Sigmoid colon (tissue), 7 donors: ENCODE measurements at regions of chr1 and their contacts with region 1.

Region 1: DNA sequence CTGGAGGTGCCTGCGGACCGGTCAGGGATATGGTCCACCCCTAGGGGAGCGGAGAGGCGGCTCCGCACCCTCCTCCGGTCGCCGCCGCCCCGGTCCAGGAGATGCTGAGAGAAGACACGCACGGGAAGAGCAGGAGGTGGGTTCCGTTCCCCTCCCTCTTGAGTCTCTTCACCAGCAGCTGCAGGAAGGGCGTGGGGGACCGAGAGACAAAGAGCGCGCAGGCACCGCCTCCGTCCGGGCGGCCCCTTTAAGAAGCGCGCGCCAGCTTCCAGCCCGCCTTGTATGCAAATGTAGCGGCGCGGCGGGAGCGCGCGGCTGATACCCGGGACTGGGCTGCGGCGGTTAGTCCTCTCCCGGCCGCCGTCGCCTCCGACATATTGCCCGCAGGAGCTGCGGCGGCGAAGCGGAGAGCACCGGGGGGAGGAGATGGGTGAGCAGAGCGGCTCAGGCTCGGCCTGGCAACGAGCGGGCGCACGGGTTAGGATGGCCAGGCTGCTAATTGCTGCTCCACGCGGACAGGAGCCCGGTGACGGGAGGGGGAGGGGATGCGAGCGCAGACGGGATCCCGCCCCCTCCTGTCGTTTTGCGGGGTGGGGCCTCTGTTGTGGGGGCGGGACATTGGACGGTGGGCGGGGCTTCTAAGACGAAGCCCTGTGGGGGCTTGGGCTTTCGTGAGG is at the start of gene TMEM39B:
- DNase-seq: peak; percentile 97
- H3K4me3 ChIP-seq: peak within 1 kb of the TSS; percentile 71 to 89 (median 77)
- H3K27ac ChIP-seq: peak within 1 kb of the TSS; percentile 90 to 97 (median 94)
- H3K4me1 ChIP-seq: peaks cover 0 to 22% (median 13%) of the 10 kb centered on the region in 4 donors
- H3K27me3 ChIP-seq: no peaks in the 10 kb centered on the region
- CTCF ChIP-seq: peak in 2 of 4 experiments; percentile 16 to 46
- EP300 ChIP-seq: peak in 1 of 4 donors; percentile 63
- POLR2A ChIP-seq: peak; percentile 26 to 44
- total RNA-seq, gene TMEM39B: 2.0 to 6.7 (median 3.7) TPM

Region 2: DNA sequence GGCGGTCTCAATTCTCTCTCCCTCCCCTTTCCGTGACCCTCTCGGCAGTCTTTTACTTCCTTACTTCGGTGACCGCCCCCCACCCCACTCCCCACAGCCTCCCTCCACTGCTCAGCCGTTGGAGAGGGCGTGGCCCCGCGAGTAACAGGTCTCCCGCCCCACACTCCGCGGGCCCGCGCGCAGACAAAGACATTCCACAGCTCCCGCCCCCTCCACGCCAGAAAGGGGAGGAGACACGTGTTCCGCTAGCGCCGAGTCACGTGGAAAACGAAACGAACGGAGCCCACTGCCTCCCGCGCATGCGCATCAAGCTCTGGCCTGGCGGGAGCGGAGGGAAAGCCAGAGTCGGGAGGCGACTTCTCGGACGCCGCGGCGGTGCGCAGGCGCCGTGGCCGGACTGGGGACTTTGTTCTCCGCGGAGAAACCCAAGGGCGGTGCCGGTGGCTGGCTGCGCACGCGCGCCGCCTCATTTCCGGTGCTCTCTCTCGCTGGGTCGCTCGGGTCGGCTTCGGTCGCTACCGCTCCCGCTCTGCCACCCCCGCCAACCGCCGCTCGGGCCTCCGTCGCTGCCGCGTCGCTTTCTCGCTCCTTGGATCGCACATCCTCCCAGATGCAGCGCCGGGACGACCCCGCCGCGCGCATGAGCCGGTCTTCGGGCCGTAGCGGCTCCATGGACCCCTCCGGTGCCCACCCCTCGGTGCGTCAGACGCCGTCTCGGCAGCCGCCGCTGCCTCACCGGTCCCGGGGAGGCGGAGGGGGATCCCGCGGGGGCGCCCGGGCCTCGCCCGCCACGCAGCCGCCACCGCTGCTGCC is 59.2 kb before region 1 on chr1 and contains the start of gene KHDRBS1:
- intact Hi-C with region 1: loop called (anchors 2 kb)
- DNase-seq: peak; percentile 100
- H3K4me3 ChIP-seq: peak within 1 kb of the TSS; percentile 74 to 100 (median 88)
- H3K27ac ChIP-seq: peak within 1 kb of the TSS; percentile 96 to 100 (median 99)
- H3K4me1 ChIP-seq: peaks cover 0 to 41% (median 35%) of the 10 kb centered on the region in 4 donors
- H3K27me3 ChIP-seq: no peaks in the 10 kb centered on the region
- CTCF ChIP-seq: no peak
- EP300 ChIP-seq: peak in 1 of 4 donors; percentile 82
- POLR2A ChIP-seq: peak; percentile 84 to 91
- total RNA-seq, gene KHDRBS1: 67.2 to 80.6 (median 73.6) TPM

Region 3: GRCh38 chr1:32107742-32108661 is 35.2 kb after region 1 on chr1 and contains the start of gene KPNA6:
- intact Hi-C with region 1: loop called (anchors 2 kb)
- DNase-seq: peak; percentile 95
- H3K4me3 ChIP-seq: peak within 1 kb of the TSS; percentile 80 to 97 (median 88)
- H3K27ac ChIP-seq: peak within 1 kb of the TSS; percentile 87 to 96 (median 92)
- H3K4me1 ChIP-seq: peaks cover 0 to 50% (median 44%) of the 10 kb centered on the region in 4 donors
- H3K27me3 ChIP-seq: no peaks in the 10 kb centered on the region
- CTCF ChIP-seq: no peak
- EP300 ChIP-seq: peak in 1 of 4 donors; percentile 12
- POLR2A ChIP-seq: peak; percentile 43 to 64
- total RNA-seq, gene KPNA6: 33.4 to 47.0 (median 41.6) TPM